CD8-positive, alpha-beta T cell (primary cell): ENCODE measurements at regions of chr2 and their contacts with region 1.

Region 1: DNA sequence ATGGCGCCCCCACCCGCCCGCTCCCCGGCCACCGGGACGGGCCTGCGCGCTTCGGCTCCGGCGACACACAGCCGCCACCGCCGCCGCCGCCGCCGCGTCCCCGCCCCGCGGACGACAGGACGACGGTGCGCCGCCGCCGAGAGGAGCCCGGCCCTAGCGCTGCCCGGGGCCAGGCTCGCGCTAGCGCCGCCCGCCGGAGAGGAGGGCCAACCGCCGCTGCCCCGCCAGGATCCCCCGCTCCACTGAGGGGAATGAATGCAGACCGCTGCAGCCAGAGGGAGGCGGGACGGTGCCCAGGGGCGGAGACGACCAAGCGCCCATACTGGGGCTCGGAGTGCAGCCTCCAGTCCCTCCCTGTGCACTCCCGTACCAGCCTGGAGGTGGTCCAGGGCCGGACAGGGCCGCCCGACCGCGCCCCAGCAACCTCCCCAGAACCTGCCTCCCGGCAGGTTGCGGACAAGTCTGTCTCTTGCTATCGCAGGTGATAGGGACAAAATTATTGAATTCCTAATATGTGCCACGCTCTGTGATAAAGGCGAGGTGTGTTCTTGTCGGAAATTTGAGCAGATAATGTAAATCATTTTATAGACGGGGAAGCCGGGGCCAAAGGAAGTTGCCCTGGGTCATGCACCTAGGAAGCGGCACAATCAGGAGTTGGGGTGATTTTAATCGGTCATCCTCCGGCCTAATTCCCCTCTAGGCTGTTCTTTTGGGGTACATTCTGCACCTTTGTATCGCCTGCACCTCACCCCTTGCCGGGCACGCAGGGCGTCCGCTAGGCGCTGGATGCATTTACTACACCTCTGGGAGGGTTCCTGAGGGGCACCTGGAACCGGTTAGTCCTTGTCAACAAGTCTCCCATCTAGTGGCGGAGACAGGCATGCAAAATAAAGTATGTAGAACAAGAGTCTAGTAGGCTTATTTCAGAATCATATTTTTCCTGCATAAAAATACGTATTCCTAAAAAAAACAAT is at the start of gene TEX261:
- DNase-seq: peak; percentile 82 to 94 (median 89)
- ATAC-seq: peak; percentile 95
- H3K4me3 ChIP-seq: peak within 1 kb of the TSS; percentile 82 to 95
- H3K4me3 Mint-ChIP-seq: peak within 1 kb of the TSS; percentile 97
- H3K27ac ChIP-seq: peak within 1 kb of the TSS; percentile 69 to 74
- H3K27ac Mint-ChIP-seq: peak within 1 kb of the TSS; percentile 96
- H3K4me1 ChIP-seq: peaks cover 21% of the 10 kb centered on the region
- H3K4me1 Mint-ChIP-seq: peaks cover 34% of the 10 kb centered on the region
- H3K27me3 ChIP-seq: no peaks in the 10 kb centered on the region
- H3K27me3 Mint-ChIP-seq: no peaks in the 10 kb centered on the region
- CTCF ChIP-seq: peak; percentile 49
- total RNA-seq, gene TEX261: 23.1 to 28.1 TPM

Region 2: DNA sequence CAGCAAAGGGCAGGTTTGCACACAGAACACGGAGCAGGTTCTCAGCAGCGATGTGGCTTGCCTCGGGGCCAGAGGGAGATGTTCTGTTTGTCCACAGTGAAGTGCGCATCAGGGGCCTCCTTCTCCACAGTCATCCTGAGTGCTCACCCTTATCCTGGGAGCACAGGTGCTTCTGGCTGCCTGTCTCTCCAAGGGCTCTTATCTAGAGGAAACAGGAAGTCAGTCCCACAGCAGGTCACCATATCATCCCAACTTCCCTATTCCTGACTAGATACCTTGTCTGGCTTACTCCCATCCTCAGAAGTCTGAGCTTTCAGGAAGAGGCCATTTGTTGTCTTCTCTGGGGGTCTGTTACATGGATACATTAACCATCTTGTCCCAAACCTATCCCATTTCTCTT is 159.4 kb before region 1 on chr2 and contains the start of gene CD207:
- CTCF ChIA-PET with region 1: no interaction called
- POLR2A ChIA-PET with region 1: no interaction called
- intact Hi-C with region 1: no loop called
- DNase-seq: no peak
- ATAC-seq: no peak
- H3K4me3 ChIP-seq: no peak within 1 kb of the TSS
- H3K4me3 Mint-ChIP-seq: no peak within 1 kb of the TSS
- H3K27ac ChIP-seq: no peak within 1 kb of the TSS
- H3K27ac Mint-ChIP-seq: no peak within 1 kb of the TSS
- H3K4me1 ChIP-seq: no peaks in the 10 kb centered on the region
- H3K4me1 Mint-ChIP-seq: no peaks in the 10 kb centered on the region
- H3K27me3 ChIP-seq: no peaks in the 10 kb centered on the region
- H3K27me3 Mint-ChIP-seq: peaks cover 12% of the 10 kb centered on the region
- CTCF ChIP-seq: no peak
- total RNA-seq, gene CD207: not detected

Region 3: GRCh38 chr2:70964596-70965386 is 30.3 kb before region 1 on chr2:
- CTCF ChIA-PET with region 1: interaction called, 33 read pairs
- POLR2A ChIA-PET with region 1: interaction called, 3 read pairs
- intact Hi-C with region 1: loop called (anchors 1 kb)
- DNase-seq: peak; percentile 67 to 90 (median 83)
- ATAC-seq: peak; percentile 97
- H3K4me3 ChIP-seq: peak overlapping the region; percentile 61 to 80
- H3K4me3 Mint-ChIP-seq: peak overlapping the region; percentile 80
- H3K27ac ChIP-seq: no peak overlapping the region
- H3K27ac Mint-ChIP-seq: no peak overlapping the region
- H3K4me1 ChIP-seq: peaks cover 12% of the 10 kb centered on the region
- H3K4me1 Mint-ChIP-seq: peaks cover 7% of the 10 kb centered on the region
- H3K27me3 ChIP-seq: peaks cover 7 to 9% of the 10 kb centered on the region in 2 experiments
- H3K27me3 Mint-ChIP-seq: peaks cover 26% of the 10 kb centered on the region
- CTCF ChIP-seq: peak; percentile 93

Region 4: DNA sequence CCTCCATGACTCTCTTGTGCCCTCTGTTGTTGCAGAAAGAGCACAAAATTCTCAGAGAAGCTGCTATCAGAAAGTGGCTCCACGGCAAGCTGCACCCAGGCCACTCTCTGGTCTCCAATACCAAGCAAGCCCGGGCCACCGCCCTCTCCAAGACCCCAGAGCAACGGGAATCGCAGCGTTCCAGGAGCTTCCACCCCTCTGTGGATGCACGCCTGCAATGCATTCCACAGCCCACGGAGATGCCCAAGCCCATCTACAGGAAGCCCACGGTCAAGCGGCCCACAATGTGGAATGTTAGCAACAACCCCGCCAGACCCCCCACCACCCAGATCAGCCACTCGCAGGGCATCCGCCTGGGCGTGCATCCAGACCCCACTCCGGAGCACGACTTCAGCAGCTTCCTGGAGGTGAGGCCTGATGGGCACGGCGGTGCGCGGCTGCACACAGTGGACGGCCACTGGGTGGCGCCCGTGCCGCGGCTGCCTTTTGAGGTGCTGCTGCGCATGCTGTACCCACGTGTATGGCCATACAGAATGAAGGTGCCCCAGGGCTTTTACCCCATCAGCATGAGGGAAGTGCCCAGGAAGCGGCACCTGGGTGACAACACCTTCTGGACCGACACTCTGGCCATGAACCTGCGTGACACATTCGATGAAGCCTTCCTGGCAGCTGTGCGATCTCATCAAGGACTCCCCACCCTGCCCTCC is 10.3 kb before region 1 on chr2:
- CTCF ChIA-PET with region 1: interaction called, 32 read pairs
- POLR2A ChIA-PET with region 1: no interaction called
- intact Hi-C with region 1: loop called (anchors 1 kb)
- DNase-seq: peak; percentile 67 to 88 (median 83)
- ATAC-seq: peak; percentile 100
- H3K4me3 ChIP-seq: no peak overlapping the region
- H3K4me3 Mint-ChIP-seq: peak overlapping the region; percentile 51
- H3K27ac ChIP-seq: no peak overlapping the region
- H3K27ac Mint-ChIP-seq: peak overlapping the region; percentile 6
- H3K4me1 ChIP-seq: peaks cover 11% of the 10 kb centered on the region
- H3K4me1 Mint-ChIP-seq: peaks cover 16% of the 10 kb centered on the region
- H3K27me3 ChIP-seq: no peaks in the 10 kb centered on the region
- H3K27me3 Mint-ChIP-seq: no peaks in the 10 kb centered on the region
- CTCF ChIP-seq: peak; percentile 84

Region 5: DNA sequence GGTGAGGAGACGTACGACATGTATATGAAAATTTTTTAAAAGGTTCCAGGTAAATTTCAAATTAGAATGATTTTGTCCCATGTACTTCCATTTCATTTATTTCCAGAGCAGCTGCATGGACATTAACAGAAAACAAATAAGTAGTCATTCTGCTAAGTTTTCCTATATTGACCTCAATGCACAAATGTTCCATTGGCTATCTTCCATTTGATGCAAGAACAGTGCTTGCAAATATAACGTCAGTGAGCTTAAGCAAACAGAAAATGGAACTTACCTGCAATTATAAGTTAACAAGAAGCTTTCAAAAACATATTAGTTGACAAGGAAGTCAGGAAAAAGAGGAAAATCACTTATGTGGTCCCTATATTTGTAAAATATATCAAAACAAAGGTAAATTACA is 215.2 kb after region 1 on chr2:
- CTCF ChIA-PET with region 1: no interaction called
- POLR2A ChIA-PET with region 1: no interaction called
- intact Hi-C with region 1: no loop called
- DNase-seq: no peak
- ATAC-seq: no peak
- H3K4me3 ChIP-seq: no peak overlapping the region
- H3K4me3 Mint-ChIP-seq: no peak overlapping the region
- H3K27ac ChIP-seq: no peak overlapping the region
- H3K27ac Mint-ChIP-seq: no peak overlapping the region
- H3K4me1 ChIP-seq: no peaks in the 10 kb centered on the region
- H3K4me1 Mint-ChIP-seq: no peaks in the 10 kb centered on the region
- H3K27me3 ChIP-seq: peaks cover 0 to 5% of the 10 kb centered on the region in 2 experiments
- H3K27me3 Mint-ChIP-seq: no peaks in the 10 kb centered on the region
- CTCF ChIP-seq: no peak

Region 6: DNA sequence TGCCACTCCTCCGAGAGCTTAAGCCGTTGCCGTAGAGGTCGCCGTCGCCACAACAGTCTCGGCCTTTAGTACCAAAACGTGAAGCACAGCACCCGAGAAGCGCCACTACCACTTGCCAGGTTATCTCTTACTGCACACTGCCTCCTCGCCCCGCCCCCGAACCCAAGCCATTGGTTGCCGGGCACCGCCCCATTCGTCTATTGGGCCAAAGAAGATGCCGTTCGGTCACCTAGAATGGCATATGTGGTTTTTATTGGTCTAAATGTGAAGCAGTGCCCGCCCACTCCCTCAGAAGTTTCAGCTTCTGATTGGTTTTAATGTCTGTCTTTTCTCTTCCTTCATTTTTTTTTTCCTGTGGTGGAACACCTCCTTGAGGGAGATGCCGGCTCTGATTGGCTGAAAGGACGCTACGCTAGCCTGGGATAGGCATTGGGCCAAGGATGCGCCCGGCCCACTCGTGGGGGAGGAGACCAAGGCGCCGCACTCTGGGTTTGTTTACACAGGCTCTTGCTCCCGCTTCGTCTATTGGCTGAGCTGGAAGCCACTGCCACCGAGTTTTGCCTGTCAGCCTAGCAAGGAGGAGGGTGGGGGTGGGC is 232.0 kb after region 1 on chr2 and contains the start of gene PAIP2B:
- CTCF ChIA-PET with region 1: no interaction called
- POLR2A ChIA-PET with region 1: no interaction called
- intact Hi-C with region 1: loop called (anchors 10 kb)
- DNase-seq: peak; percentile 95 to 99 (median 96)
- ATAC-seq: peak; percentile 89
- H3K4me3 ChIP-seq: peak within 1 kb of the TSS; percentile 77 to 81
- H3K4me3 Mint-ChIP-seq: peak within 1 kb of the TSS; percentile 97
- H3K27ac ChIP-seq: peak within 1 kb of the TSS; percentile 79 to 81
- H3K27ac Mint-ChIP-seq: peak within 1 kb of the TSS; percentile 98
- H3K4me1 ChIP-seq: peaks cover 15% of the 10 kb centered on the region
- H3K4me1 Mint-ChIP-seq: peaks cover 31% of the 10 kb centered on the region
- H3K27me3 ChIP-seq: peaks cover 0 to 2% of the 10 kb centered on the region in 2 experiments
- H3K27me3 Mint-ChIP-seq: peaks cover 12% of the 10 kb centered on the region
- CTCF ChIP-seq: no peak
- total RNA-seq, gene PAIP2B: 1.7 to 1.8 TPM

Region 7: DNA sequence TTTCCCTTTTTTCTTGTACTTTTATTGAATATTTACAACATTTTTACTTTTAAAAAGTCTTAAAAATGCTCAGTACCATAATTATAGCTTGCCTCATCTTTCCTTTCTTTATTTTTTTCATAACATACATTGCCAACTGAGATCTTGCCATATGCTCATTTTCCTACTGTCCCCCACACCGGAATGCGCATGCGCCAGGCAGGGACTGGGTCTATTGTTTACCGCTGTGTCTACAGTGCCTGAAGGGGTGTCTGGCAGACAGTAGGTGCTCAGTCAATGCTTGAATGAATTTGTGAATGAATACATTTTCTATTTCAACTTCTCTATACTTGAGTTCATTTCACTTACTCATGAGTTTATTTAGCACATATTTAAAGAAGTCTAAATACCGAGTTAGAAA is 994.6 kb after region 1 on chr2:
- CTCF ChIA-PET with region 1: no interaction called
- POLR2A ChIA-PET with region 1: no interaction called
- intact Hi-C with region 1: no loop called
- DNase-seq: no peak
- ATAC-seq: no peak
- H3K4me3 ChIP-seq: no peak overlapping the region
- H3K4me3 Mint-ChIP-seq: no peak overlapping the region
- H3K27ac ChIP-seq: no peak overlapping the region
- H3K27ac Mint-ChIP-seq: no peak overlapping the region
- H3K4me1 ChIP-seq: no peaks in the 10 kb centered on the region
- H3K4me1 Mint-ChIP-seq: no peaks in the 10 kb centered on the region
- H3K27me3 ChIP-seq: no peaks in the 10 kb centered on the region
- H3K27me3 Mint-ChIP-seq: no peaks in the 10 kb centered on the region
- CTCF ChIP-seq: no peak